Sigmoid colon (tissue), 7 donors: ENCODE measurements at regions of chr15 and their contacts with region 1.

Region 1: GRCh38 chr15:91706322-91707032 is 147.0 kb upstream of the SLCO3A1 start:
- DNase-seq: peak; percentile 87
- H3K4me3 ChIP-seq: no peak overlapping the region
- H3K27ac ChIP-seq: peak overlapping the region in 2 of 4 donors; percentile 20 to 41
- H3K4me1 ChIP-seq: no peaks in the 10 kb centered on the region
- H3K27me3 ChIP-seq: no peaks in the 10 kb centered on the region
- CTCF ChIP-seq: peak; percentile 29 to 68 (median 55)
- EP300 ChIP-seq: no peak
- POLR2A ChIP-seq: no peak

Region 2: GRCh38 chr15:92077353-92078085 is 371.0 kb after region 1 on chr15:
- intact Hi-C with region 1: loop called (anchors 10 kb)
- DNase-seq: peak; percentile 79
- H3K4me3 ChIP-seq: no peak overlapping the region
- H3K27ac ChIP-seq: no peak overlapping the region
- H3K4me1 ChIP-seq: peaks cover 0 to 8% (median 3%) of the 10 kb centered on the region in 4 donors
- H3K27me3 ChIP-seq: no peaks in the 10 kb centered on the region
- CTCF ChIP-seq: peak in 3 of 4 experiments; percentile 47 to 56 (median 49)
- EP300 ChIP-seq: no peak
- POLR2A ChIP-seq: no peak